OCI-LY7 (cell line): ENCODE measurements at regions of chr5 and their contacts with region 1.

Region 1: DNA sequence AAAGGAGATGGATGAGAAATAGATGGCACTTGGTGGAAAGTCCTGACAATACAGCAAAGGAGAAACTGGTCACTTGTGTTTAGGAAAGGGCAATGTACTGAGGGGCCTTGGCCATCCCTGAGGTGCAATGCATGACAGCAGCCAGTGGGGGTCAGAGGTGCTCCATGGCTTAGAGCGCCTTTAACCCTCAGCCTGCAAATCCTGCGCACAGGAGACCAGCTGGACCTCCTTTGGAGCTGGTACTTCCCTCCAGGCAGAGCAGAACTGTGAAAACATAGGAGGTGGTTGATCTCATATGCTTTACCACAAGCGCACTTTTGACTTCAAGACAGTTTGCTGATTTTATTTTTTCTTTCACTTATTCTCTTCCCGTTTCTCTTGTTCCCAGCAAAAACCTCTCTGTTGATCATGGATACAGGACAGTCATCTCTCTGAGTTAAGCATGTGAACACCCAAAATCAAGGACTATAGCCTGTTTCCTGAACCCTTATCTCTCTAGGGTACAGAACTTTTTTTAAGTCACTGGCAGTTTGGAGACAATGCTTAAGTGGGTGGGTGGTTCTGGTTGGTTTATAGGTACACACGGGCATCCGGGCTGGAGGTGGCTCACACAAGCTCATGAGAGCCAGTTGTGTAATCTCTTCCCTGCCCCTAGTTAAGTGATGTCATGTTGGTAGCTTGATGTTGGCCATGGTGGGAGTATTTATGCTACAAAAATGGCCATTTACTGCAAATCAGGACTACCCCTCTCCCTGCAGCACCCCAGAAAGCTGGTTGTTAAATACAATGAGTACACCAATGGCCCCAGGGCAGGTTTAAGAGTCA is 37.6 kb upstream of the ANKRD55 start:
- DNase-seq: peak; percentile 78
- H3K4me3 ChIP-seq: no peak overlapping the region
- H3K27ac ChIP-seq: no peak overlapping the region
- H3K4me1 ChIP-seq: no peaks in the 10 kb centered on the region
- CTCF ChIP-seq: peak; percentile 93

Region 2: DNA sequence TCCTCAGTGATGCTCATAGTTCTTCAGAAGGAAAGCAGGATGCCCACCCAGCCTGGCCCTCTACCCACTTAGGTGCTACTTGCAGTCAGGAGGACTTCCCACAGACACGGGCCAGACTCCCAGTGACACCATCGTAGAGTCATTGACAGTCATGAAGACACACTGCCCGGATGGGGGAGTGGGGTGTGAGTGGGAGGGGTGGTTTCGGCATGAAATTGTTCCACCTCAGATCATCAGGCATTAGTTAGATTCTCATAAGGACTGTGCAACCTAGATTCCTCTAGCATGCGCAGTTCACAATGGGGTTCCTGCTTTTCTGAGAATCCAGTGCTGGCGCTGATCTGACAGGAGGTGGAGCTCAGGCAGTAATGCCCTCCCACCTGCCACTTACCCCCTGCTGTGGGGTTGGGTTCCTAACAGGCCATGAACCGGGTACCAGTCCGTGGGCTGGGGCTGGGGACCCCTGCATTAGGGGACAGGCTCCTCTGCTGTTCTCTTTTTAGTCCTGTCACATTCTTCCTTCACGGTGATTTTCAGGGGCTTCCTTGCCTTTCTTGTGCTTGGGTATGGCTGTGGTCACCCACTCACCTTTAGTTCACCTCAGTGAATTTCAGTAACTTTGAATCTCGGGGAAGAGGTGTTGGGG is 50.6 kb after region 1 on chr5:
- CTCF ChIA-PET with region 1: no interaction called
- POLR2A ChIA-PET with region 1: no interaction called
- intact Hi-C with region 1: no loop called
- DNase-seq: no peak
- H3K4me3 ChIP-seq: no peak overlapping the region
- H3K27ac ChIP-seq: no peak overlapping the region
- H3K4me1 ChIP-seq: peaks cover 6% of the 10 kb centered on the region
- CTCF ChIP-seq: no peak

Region 3: DNA sequence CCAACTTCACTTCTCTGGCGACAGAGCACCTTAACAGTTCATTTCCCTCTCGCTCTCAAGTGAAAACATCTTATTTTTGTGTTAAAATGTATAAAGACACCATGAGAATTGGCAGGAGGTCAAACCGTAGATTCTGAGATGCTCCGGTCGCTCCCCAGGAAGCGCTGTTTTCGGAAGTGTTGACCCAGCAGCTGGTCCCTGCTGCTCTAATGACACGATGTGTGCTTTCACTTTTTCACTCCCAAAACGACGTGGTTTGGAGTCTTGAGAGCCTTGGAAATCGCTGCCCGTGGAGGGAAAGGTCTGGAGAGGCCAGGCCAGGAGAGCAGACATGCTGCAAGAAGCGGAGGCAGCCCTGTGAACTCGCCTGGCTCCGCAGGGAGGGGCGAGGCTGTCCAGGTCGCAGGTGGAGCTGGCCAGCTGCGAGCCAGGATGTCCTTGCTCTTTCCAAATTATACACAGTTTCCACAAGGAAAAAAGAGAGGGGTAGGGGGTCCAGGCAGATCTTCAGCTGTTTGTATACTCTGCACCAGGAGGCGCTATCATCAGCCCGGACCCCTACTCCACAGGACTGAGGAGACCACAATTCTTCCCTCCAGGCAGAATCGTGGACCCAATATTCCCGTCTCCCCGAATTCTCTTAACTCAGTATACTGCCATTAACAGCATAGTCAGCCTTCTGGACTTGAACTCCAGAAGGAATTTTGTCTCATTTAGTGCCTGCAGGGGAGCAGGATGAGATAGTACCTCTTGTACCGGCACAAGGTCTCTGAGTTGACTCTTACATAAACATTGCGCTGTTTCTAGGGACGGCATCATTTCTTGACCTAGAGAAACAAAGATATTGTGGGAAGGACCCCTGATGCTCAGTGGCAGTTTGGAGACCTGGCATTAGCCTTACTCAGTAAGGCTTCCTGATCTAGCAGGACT is 210.9 kb after region 1 on chr5:
- CTCF ChIA-PET with region 1: no interaction called
- POLR2A ChIA-PET with region 1: no interaction called
- intact Hi-C with region 1: loop called (anchors 5 kb)
- DNase-seq: peak; percentile 56
- H3K4me3 ChIP-seq: peak overlapping the region; percentile 65
- H3K27ac ChIP-seq: peak overlapping the region; percentile 60
- H3K4me1 ChIP-seq: peaks cover 40% of the 10 kb centered on the region
- CTCF ChIP-seq: peak; percentile 81

Region 4: DNA sequence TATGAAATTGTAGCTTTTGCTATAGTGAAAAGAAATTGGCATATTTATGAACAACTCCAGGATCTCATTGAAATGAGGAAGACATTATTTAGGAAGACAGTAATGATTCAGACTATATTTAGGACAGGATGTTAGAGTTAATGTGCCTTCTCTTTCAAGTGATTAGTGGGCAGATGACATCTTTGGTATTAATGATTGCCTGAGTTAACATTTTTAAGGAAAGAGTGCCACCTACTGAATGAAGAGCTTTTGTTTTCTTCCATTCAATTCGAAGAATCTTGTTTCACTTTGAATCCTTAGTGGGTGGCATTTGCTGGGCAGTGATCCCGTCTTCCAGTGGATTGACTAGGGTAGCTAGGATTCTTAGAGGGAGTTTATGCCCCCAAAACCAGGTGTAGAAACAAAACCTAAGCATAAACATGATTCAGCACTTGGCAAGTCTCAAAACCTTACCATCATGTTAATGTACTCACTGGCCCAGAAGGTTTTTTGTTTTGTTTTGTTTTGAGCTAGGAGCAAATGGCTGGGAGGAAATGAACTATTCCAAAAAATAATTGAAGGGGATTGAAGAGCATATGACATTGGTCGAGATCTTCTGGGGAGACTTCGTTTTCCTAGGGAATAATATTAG is 567.7 kb after region 1 on chr5:
- CTCF ChIA-PET with region 1: interaction called, 8 read pairs
- POLR2A ChIA-PET with region 1: interaction called, 8 read pairs
- intact Hi-C with region 1: loop called (anchors 1 kb)
- DNase-seq: peak; percentile 70
- H3K4me3 ChIP-seq: peak overlapping the region; percentile 28
- H3K27ac ChIP-seq: peak overlapping the region; percentile 3
- H3K4me1 ChIP-seq: peaks cover 42% of the 10 kb centered on the region
- CTCF ChIP-seq: peak; percentile 87

Region 5: DNA sequence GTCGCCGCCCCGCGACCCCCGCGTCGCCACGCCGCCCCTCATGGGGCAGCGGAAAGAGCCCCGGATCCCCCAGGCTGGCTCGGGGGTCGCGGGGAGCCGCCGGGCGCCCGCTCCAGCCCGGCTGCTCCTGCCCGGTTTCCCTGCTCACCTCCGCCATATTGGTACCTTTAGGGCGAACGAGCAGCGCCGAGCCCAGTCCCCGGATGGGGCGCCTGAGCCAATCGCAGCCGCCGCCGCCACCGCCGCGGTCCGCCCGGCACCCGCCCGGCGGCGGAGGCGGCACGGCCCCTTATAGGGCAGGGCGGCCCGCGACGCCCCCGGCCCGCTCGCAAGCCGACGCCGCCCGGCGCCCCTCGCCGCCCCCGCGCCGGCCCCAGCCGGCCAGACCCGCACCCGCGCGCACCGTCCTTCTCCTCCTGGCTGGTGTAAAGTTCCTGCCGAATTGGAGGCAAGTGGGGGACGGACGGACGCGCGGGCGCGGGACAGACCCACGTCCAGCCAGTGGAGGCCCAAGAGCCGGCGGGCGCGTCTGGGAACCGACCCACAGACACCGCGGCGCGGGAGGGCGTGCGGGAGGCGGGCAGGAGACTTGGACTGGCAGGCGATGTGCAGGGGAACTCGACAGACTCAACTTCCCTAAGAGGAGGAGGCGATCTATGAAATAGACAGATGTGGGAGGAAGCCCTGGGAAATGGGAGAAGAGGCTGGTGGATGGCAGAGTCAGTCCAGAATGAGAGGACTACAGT is 681.3 kb after region 1 on chr5 and contains the start of gene MIER3:
- CTCF ChIA-PET with region 1: no interaction called
- POLR2A ChIA-PET with region 1: no interaction called
- intact Hi-C with region 1: loop called (anchors 1 kb)
- DNase-seq: peak; percentile 85
- H3K4me3 ChIP-seq: peak within 1 kb of the TSS; percentile 96
- H3K27ac ChIP-seq: peak within 1 kb of the TSS; percentile 42
- H3K4me1 ChIP-seq: peaks cover 16% of the 10 kb centered on the region
- CTCF ChIP-seq: no peak
- total RNA-seq, gene MIER3: 12.6 and 51.9 TPM in 2 replicates

Region 6: DNA sequence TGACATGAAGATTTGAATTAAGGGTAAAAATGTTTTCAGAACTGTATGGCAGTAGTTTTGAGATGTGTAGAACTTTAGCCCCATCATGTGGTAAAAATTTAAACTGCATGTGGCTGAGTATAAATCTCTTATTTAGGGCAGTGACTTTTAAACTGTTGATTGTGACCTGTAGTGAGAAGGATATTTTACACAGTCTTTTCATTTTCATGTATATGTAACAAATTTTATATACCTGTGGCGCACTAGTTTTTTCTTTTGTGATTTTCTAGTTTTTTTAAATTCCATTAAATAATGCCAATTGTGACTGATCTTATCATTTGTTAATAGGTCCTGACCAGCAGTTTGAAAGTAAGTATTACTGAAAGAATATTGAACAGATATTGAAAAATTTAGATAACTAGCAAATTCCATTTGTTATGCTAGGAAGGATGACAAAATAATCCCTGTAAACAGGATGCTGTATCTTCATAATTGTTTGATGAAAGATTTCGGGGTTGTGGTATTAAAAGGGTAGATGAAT is 950.3 kb after region 1 on chr5:
- CTCF ChIA-PET with region 1: no interaction called
- POLR2A ChIA-PET with region 1: no interaction called
- intact Hi-C with region 1: loop called (anchors 1 kb)
- DNase-seq: peak; percentile 68
- H3K4me3 ChIP-seq: no peak overlapping the region
- H3K27ac ChIP-seq: no peak overlapping the region
- H3K4me1 ChIP-seq: no peaks in the 10 kb centered on the region
- CTCF ChIP-seq: peak; percentile 98